Activated naive CD4-positive, alpha-beta T cell treated with anti-CD3 and anti-CD28 coated beads for 36 hours (primary cell): ENCODE measurements at regions of chr1 and their contacts with region 1.

Region 1: DNA sequence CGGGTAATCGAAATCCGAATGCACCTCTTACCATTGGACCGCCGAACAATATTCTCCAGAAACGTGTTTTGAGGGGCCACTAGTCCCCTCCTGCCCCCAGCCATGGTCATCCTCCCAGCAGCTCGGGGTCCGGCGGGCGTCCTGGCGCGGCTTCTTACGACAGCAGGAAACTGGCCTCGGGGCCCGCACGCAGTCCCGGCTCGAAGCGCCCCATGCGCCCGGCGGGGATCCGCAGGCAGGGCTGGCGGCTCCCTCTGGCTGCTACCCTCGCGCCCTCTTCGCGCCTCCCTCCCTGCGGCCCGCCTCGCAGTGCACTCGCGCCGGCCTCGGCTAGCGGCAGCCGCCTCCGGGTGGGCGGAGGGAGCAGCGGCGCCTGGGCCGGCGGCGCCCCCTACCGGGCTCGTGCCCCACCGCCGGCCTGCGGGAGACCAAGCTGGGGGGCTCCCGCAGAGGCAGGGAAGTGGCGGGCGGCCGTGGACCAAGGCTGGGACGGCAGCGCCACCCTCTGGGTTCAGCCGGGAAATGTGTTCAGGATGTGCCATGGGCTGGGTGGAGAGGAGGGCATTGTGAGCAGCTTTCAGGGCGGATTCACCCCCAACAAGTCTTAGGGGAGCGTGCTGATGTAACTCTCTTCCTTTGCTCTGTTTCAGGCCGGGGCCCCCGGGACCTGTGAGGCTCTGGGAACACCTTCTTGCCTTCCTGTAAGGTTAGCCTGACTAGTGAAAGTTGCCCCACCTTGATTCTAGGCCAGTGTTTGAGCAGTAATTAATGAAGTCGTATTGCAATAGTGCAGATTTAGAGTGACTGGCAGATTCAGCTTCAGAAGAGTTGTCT is at the start of gene KCNH1:
- DNase-seq: peak; percentile 90
- H3K4me3 Mint-ChIP-seq: peak within 1 kb of the TSS; percentile 66
- H3K27ac Mint-ChIP-seq: no peak within 1 kb of the TSS
- H3K4me1 Mint-ChIP-seq: peaks cover 7% of the 10 kb centered on the region
- H3K27me3 Mint-ChIP-seq: peaks cover 50% of the 10 kb centered on the region
- total RNA-seq, gene KCNH1: not detected

Region 2: GRCh38 chr1:210328746-210329503 is 805.1 kb before region 1 on chr1 and contains the start of gene HHAT:
- CTCF ChIA-PET with region 1: no interaction called
- intact Hi-C with region 1: loop called (anchors 5 kb)
- DNase-seq: peak; percentile 84
- H3K4me3 Mint-ChIP-seq: peak within 1 kb of the TSS; percentile 93
- H3K27ac Mint-ChIP-seq: peak within 1 kb of the TSS; percentile 95
- H3K4me1 Mint-ChIP-seq: peaks cover 41% of the 10 kb centered on the region
- H3K27me3 Mint-ChIP-seq: peaks cover 4% of the 10 kb centered on the region
- total RNA-seq, gene HHAT: 3.6 to 3.9 TPM

Region 3: GRCh38 chr1:210584439-210585113 is 549.5 kb before region 1 on chr1:
- CTCF ChIA-PET with region 1: interaction called, 45 read pairs
- intact Hi-C with region 1: loop called (anchors 1 kb)
- DNase-seq: peak; percentile 90
- H3K4me3 Mint-ChIP-seq: no peak overlapping the region
- H3K27ac Mint-ChIP-seq: no peak overlapping the region
- H3K4me1 Mint-ChIP-seq: peaks cover 3% of the 10 kb centered on the region
- H3K27me3 Mint-ChIP-seq: peaks cover 6% of the 10 kb centered on the region

Region 4: GRCh38 chr1:210618369-210618768 is 515.7 kb before region 1 on chr1:
- CTCF ChIA-PET with region 1: no interaction called
- intact Hi-C with region 1: no loop called
- DNase-seq: no peak
- H3K4me3 Mint-ChIP-seq: no peak overlapping the region
- H3K27ac Mint-ChIP-seq: no peak overlapping the region
- H3K4me1 Mint-ChIP-seq: no peaks in the 10 kb centered on the region
- H3K27me3 Mint-ChIP-seq: peaks cover 3% of the 10 kb centered on the region

Region 5: DNA sequence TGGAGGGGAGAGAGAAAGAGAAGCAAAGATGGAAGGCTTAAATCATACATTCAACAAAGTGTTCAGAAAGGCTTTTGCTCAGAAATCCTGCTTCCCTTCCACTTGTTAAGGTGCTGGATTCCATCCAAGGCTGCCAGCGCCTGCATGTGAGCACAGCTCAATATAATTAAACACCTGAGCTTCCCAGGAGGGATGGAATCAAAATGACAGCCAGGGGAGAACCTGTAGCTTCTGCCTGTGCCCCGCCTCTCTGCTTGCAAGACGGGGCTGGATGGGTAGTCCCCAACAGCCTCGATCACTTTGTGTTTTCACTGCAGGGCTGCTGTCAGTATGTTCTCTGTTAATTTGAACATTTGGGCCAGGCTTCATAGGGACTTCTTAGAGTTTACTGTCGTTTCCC is 225.8 kb before region 1 on chr1:
- CTCF ChIA-PET with region 1: no interaction called
- intact Hi-C with region 1: no loop called
- DNase-seq: no peak
- H3K4me3 Mint-ChIP-seq: no peak overlapping the region
- H3K27ac Mint-ChIP-seq: no peak overlapping the region
- H3K4me1 Mint-ChIP-seq: no peaks in the 10 kb centered on the region
- H3K27me3 Mint-ChIP-seq: peaks cover 14% of the 10 kb centered on the region

Region 6: GRCh38 chr1:210944252-210944651 is 189.8 kb before region 1 on chr1:
- CTCF ChIA-PET with region 1: no interaction called
- intact Hi-C with region 1: loop called (anchors 5 kb)
- DNase-seq: no peak
- H3K4me3 Mint-ChIP-seq: no peak overlapping the region
- H3K27ac Mint-ChIP-seq: no peak overlapping the region
- H3K4me1 Mint-ChIP-seq: peaks cover 4% of the 10 kb centered on the region
- H3K27me3 Mint-ChIP-seq: peaks cover 2% of the 10 kb centered on the region

Region 7: DNA sequence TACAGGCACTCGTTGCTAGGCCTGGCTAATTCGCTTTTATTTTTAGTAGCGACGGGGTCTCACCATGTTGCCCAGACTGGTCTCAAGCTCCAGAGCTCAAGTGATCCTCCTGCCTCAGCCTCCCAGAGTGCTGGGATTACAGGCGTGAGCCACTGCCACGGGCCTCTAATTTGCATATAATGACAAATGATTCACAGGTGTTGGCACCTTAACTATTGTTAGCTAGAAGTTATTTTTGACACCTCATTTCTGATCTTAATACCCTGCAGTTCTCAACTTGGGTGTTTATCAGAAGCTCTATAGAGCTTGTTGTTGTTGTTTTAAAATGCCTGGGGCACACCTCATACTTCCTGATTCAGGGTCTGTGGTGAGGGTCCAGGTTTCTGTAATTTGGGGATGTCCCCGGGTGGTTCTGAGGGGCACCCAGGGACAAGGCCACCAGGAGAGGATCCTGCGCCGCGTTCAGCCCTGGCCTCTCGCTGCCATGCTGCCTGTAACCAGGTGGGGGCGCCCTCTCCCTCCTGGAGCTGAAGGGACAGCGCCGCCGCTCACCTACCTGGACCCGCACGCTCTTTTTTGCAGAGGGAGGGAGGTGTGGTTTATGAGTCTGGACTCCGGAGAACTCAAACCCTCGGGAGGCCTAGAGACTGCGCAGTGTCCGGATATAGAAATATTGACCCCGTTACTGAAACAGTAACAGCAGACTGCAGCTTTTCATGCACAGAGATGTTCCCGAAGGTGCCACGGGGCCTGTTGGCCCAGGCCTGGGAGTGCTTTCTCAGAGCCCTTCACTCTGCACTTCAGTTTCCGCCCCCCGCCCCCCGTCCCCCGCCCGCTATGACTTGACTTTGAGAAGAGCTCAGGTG is 564.3 kb after region 1 on chr1:
- CTCF ChIA-PET with region 1: no interaction called
- intact Hi-C with region 1: no loop called
- DNase-seq: peak; percentile 92
- H3K4me3 Mint-ChIP-seq: peak overlapping the region; percentile 49
- H3K27ac Mint-ChIP-seq: no peak overlapping the region
- H3K4me1 Mint-ChIP-seq: peaks cover 14% of the 10 kb centered on the region
- H3K27me3 Mint-ChIP-seq: no peaks in the 10 kb centered on the region

Region 8: GRCh38 chr1:211715971-211716370 is 581.9 kb after region 1 on chr1:
- CTCF ChIA-PET with region 1: no interaction called
- intact Hi-C with region 1: no loop called
- DNase-seq: no peak
- H3K4me3 Mint-ChIP-seq: no peak overlapping the region
- H3K27ac Mint-ChIP-seq: no peak overlapping the region
- H3K4me1 Mint-ChIP-seq: no peaks in the 10 kb centered on the region
- H3K27me3 Mint-ChIP-seq: no peaks in the 10 kb centered on the region